Heart left ventricle (tissue), 16 donors: ENCODE measurements at regions of chr3 and their contacts with region 1.

Region 1: DNA sequence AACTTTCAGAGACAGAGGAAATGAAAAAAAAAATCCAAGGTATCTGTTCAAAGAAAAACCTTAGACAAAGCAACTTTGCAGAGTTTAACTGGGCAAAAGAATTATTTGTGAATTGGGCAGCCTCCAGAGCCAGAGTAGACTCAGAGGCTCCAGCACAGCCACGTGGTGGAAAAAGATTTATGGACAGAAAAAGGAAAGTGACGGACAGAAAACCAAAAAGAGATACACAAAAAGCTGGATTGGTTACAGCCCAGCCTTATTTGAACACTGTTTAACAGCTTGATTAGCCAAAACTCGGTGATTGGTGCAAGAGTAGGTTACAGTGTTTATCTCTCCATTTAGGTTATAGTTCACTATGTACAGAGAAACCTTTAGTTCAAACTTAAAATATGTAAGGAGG is 23.7 kb upstream of the GPD1L start:
- DNase-seq: no peak
- ATAC-seq: peak in 1 of 4 donors; percentile 37
- H3K4me3 ChIP-seq: no peak overlapping the region
- H3K27ac ChIP-seq: peak overlapping the region in 3 of 12 donors; percentile 1 to 53 (median 44)
- H3K4me1 ChIP-seq: peaks cover 0 to 22% (median 0%) of the 10 kb centered on the region in 12 donors
- H3K27me3 ChIP-seq: no peaks in the 10 kb centered on the region
- CTCF ChIP-seq: peak in 1 of 12 donors; percentile 6
- POLR2A ChIP-seq: no peak

Region 2: GRCh38 chr3:32045091-32045964 is 37.4 kb before region 1 on chr3:
- intact Hi-C with region 1: loop called in 1 of 10 experiments (anchors 5 kb)
- DNase-seq: peak in 3 of 5 donors; percentile 15 to 39 (median 32)
- ATAC-seq: peak; percentile 72 to 95 (median 90)
- H3K4me3 ChIP-seq: peak overlapping the region in 7 of 12 donors; percentile 5 to 17 (median 13)
- H3K27ac ChIP-seq: peak overlapping the region; percentile 28 to 80 (median 72)
- H3K4me1 ChIP-seq: peaks cover 0 to 19% (median 13%) of the 10 kb centered on the region in 12 donors
- H3K27me3 ChIP-seq: no peaks in the 10 kb centered on the region
- CTCF ChIP-seq: no peak
- POLR2A ChIP-seq: no peak

Region 3: GRCh38 chr3:32283304-32283703 is 200.6 kb after region 1 on chr3:
- intact Hi-C with region 1: no loop called
- DNase-seq: peak; percentile 65 to 79 (median 78)
- ATAC-seq: peak in 3 of 4 donors; percentile 67 to 90 (median 71)
- H3K4me3 ChIP-seq: no peak overlapping the region
- H3K27ac ChIP-seq: peak overlapping the region in 10 of 12 donors; percentile 0 to 61 (median 32)
- H3K4me1 ChIP-seq: peaks cover 0 to 42% (median 10%) of the 10 kb centered on the region in 12 donors
- H3K27me3 ChIP-seq: no peaks in the 10 kb centered on the region
- CTCF ChIP-seq: no peak
- POLR2A ChIP-seq: no peak